ENCODE measurements at regions of chr6 and their contacts with region 1.

Region 1: DNA sequence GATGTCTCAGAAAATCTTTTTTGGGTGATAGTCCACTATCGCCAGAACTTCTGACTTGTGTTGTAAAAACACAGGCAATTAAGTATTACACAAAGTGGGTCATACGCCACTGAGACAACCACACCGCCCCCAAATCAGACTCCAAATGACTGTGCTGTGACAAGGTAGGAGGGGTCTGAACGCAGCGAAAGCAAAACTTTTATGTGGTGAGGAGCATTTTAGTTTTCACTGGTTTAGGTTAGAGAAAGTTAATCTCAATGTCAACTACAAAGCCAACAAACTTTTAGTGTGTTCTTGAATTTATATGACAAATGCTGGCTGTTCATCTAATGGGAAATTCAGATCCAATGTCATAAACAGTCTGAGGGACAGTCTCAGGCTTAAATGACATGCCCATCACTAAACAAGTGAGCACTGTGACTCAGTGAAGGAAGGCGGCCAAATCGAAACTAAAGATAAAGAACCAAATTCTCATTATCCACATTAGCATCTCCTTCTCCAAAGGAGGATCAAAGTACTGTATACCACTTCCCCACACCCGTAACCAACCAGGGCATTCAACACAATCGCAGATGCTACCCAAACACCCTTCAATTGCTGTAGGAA is 186.7 kb downstream of the GJA10 start:
- DNase-seq: peak; percentile 77
- H3K4me3 Mint-ChIP-seq: peak overlapping the region; percentile 94
- H3K27ac Mint-ChIP-seq: peak overlapping the region; percentile 98
- H3K4me1 Mint-ChIP-seq: peaks cover 78% of the 10 kb centered on the region
- H3K27me3 Mint-ChIP-seq: no peaks in the 10 kb centered on the region

Region 2: GRCh38 chr6:89638320-89639195 is 442.4 kb before region 1 on chr6 and contains the start of gene LYRM2:
- intact Hi-C with region 1: no loop called
- DNase-seq: peak; percentile 89
- H3K4me3 Mint-ChIP-seq: peak within 1 kb of the TSS; percentile 84
- H3K27ac Mint-ChIP-seq: peak within 1 kb of the TSS; percentile 94
- H3K4me1 Mint-ChIP-seq: peaks cover 16% of the 10 kb centered on the region
- H3K27me3 Mint-ChIP-seq: no peaks in the 10 kb centered on the region
- total RNA-seq, gene LYRM2: 28.7 and 30.0 TPM in 2 replicates

Region 3: DNA sequence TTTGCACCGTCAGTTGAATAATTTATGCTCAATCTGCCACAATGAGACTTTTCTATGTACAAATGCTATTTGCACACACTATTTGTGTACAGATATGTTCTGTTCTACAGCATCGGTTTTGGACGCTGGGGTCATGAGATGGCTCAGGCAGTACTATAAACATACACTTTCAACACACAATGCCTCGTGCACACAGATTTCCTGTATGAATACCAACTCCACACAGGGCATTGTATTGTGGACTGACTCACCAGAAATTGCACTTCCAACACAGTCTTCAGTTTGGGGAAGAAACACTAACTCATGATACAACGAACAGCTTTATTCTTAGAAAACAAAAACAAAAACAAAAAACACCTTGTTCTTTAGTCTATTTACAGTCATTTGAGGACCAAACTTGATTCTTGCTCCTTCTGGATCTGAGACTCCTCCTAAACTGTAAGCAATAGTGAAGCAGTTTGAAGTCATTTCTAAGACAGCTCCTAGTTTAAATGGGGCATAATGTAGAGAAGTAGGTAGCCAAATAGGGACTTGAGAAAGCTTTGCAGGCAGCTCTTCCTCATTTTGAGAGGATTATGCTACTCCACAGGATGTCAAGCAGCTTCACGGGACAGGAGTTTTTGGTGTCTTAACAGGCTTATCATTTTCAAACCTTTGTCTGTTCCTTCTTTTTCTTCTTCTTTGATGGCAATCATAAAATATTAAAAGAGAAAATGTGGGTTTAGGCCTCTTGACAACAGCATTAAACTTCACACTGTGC is 153.0 kb before region 1 on chr6:
- intact Hi-C with region 1: no loop called
- DNase-seq: no peak
- H3K4me3 Mint-ChIP-seq: no peak overlapping the region
- H3K27ac Mint-ChIP-seq: no peak overlapping the region
- H3K4me1 Mint-ChIP-seq: peaks cover 34% of the 10 kb centered on the region
- H3K27me3 Mint-ChIP-seq: no peaks in the 10 kb centered on the region

Region 4: DNA sequence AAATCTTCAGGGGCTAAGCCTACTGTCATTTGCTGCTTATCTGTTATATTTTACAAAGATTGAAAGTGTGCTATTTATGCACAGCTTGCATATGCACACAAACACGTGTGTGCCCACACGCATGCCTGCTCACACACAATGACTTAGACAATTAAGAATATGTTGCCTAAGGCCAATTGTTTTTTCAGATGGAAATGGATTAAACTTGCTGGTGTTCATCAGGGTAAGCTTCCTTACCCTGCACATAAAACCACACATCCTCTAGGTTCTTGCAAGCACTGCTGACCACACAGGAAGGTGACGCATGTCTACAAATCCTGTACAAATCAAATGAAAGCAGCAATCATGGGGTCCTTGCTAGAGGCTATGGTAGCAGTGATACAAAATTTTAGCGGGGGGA is 128.3 kb before region 1 on chr6:
- intact Hi-C with region 1: loop called (anchors 1 kb)
- DNase-seq: peak; percentile 53
- H3K4me3 Mint-ChIP-seq: peak overlapping the region; percentile 49
- H3K27ac Mint-ChIP-seq: peak overlapping the region; percentile 76
- H3K4me1 Mint-ChIP-seq: peaks cover 67% of the 10 kb centered on the region
- H3K27me3 Mint-ChIP-seq: no peaks in the 10 kb centered on the region

Region 5: GRCh38 chr6:90103056-90103800 is 22.2 kb after region 1 on chr6:
- intact Hi-C with region 1: loop called (anchors 1 kb)
- DNase-seq: no peak
- H3K4me3 Mint-ChIP-seq: peak overlapping the region; percentile 56
- H3K27ac Mint-ChIP-seq: peak overlapping the region; percentile 85
- H3K4me1 Mint-ChIP-seq: peaks cover 67% of the 10 kb centered on the region
- H3K27me3 Mint-ChIP-seq: peaks cover 2% of the 10 kb centered on the region

Region 6: GRCh38 chr6:90230548-90231215 is 149.7 kb after region 1 on chr6:
- intact Hi-C with region 1: loop called (anchors 1 kb)
- DNase-seq: no peak
- H3K4me3 Mint-ChIP-seq: peak overlapping the region; percentile 7
- H3K27ac Mint-ChIP-seq: peak overlapping the region; percentile 33
- H3K4me1 Mint-ChIP-seq: peaks cover 81% of the 10 kb centered on the region
- H3K27me3 Mint-ChIP-seq: no peaks in the 10 kb centered on the region

Region 7: DNA sequence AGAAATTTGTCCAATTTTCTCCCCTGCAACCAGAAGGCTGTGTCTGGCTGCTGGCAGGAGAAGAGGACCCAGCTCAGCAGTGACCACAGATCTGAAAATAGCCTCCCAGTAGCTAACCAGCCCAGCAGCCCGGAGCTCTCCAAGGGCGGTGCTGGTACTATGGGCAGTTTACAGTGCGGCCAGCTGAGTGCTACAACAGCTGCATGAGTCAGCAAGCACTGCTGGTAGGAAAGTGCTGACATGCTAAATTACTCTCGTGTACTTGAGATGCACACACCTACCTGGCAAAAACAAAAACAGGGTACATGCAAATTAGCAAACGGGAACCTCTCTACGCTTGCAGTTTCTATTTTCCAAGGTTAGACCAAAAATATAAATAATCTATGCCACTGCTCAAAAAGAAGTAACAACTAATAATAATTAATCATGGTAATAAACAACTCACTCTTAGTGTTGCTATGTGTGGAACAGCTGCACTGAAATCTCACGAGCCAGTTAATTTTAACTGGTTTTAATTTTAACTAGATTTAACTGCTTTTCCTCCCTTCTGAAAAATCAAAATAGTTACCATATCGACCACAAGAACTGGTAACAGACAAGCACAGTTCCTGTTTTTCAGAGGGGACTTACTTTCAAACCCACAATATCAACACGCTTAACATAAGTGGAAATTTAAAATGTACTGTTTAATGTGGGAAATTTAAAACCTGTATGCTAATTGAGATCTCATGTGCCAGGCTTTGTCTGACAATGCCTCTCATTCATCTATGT is 204.8 kb after region 1 on chr6:
- intact Hi-C with region 1: loop called (anchors 1 kb)
- DNase-seq: peak; percentile 51
- H3K4me3 Mint-ChIP-seq: peak overlapping the region; percentile 71
- H3K27ac Mint-ChIP-seq: peak overlapping the region; percentile 90
- H3K4me1 Mint-ChIP-seq: peaks cover 83% of the 10 kb centered on the region
- H3K27me3 Mint-ChIP-seq: no peaks in the 10 kb centered on the region

Region 8: GRCh38 chr6:90458353-90459224 is 377.6 kb after region 1 on chr6:
- intact Hi-C with region 1: loop called (anchors 1 kb)
- DNase-seq: peak; percentile 68
- H3K4me3 Mint-ChIP-seq: peak overlapping the region; percentile 27
- H3K27ac Mint-ChIP-seq: peak overlapping the region; percentile 95
- H3K4me1 Mint-ChIP-seq: peaks cover 76% of the 10 kb centered on the region
- H3K27me3 Mint-ChIP-seq: no peaks in the 10 kb centered on the region

Measured in activated T-helper 2 cell treated with anti-CD3 and anti-CD28 coated beads, Interferon-gamma antibody, Interleukin-2, Interleukin-4, amounts not matched to agents 10 μg/mL and 5 μg/mL and 100 μg/mL, durations not matched to agents 14 hours and 24 hours and 36 hours (primary cell).